ENCODE measurements at regions of chr9 and their contacts with region 1.

Region 1: DNA sequence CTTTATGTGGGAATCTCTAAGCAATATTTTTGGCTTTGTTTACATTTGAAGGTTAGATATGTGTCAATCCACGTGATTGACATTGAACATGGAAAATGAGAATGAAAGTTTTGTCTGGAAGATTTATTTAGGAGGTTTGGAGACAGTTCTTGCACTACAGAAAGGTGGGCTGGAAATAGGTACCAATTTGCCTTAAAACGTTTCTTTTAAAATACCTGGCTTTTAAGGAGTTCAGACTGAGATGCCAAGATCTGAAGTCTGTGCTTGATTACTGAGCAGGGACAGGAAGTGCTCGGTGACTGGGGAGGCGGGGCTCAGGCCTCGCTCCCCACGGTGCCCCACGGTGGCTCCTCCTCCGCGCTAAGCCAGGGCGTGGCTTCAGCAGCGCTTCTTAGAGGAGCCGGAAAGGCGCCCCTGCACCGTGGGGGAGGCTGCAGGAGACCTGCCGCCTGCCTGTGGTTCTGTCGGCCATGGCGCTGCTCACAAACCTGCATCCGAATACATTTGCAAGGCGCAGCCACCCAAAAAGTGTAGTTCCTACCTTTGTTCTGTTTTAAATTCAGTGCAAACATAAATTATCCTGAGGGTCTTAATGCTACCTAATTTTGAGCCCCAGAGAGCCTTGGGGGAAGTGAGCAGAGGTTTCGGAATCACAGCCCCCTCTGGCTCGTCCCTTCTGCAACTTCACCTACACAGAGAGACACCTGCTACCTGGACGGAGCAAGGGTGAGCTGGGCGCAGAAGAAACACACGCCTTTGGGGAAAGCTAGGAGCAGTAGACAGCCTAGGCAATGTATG is 49.2 kb downstream of the USP20 start:
- DNase-seq: peak; percentile 86 to 97 (median 96)
- ATAC-seq: peak; percentile 69
- H3K4me3 ChIP-seq: peak overlapping the region; percentile 58
- H3K4me3 Mint-ChIP-seq: peak overlapping the region; percentile 85 to 98 (median 94)
- H3K27ac ChIP-seq: peak overlapping the region; percentile 99
- H3K27ac Mint-ChIP-seq: peak overlapping the region; percentile 97 to 100 (median 100)
- H3K4me1 ChIP-seq: peaks cover 20 to 37% of the 10 kb centered on the region in 2 donors
- H3K4me1 Mint-ChIP-seq: peaks cover 37 to 57% (median 48%) of the 10 kb centered on the region in 7 donors
- H3K27me3 ChIP-seq: no peaks in the 10 kb centered on the region
- H3K27me3 Mint-ChIP-seq: peaks cover 0 to 4% (median 0%) of the 10 kb centered on the region in 5 donors

Region 2: GRCh38 chr9:129737479-129738274 is 146.7 kb before region 1 on chr9:
- CTCF ChIA-PET with region 1: interaction called, 3 read pairs
- POLR2A ChIA-PET with region 1: no interaction called
- intact Hi-C with region 1: loop called in 1 of 2 experiments (anchors 2 kb)
- DNase-seq: peak; percentile 73 to 95 (median 87)
- ATAC-seq: peak; percentile 96
- H3K4me3 ChIP-seq: peak overlapping the region; percentile 91
- H3K4me3 Mint-ChIP-seq: peak overlapping the region; percentile 66 to 84 (median 78)
- H3K27ac ChIP-seq: peak overlapping the region; percentile 76
- H3K27ac Mint-ChIP-seq: peak overlapping the region; percentile 50 to 94 (median 71)
- H3K4me1 ChIP-seq: peaks cover 6% of the 10 kb centered on the region in 2 donors
- H3K4me1 Mint-ChIP-seq: peaks cover 0 to 12% (median 8%) of the 10 kb centered on the region in 7 donors
- H3K27me3 ChIP-seq: no peaks in the 10 kb centered on the region
- H3K27me3 Mint-ChIP-seq: peaks cover 0 to 2% (median 0%) of the 10 kb centered on the region in 5 donors

Region 3: DNA sequence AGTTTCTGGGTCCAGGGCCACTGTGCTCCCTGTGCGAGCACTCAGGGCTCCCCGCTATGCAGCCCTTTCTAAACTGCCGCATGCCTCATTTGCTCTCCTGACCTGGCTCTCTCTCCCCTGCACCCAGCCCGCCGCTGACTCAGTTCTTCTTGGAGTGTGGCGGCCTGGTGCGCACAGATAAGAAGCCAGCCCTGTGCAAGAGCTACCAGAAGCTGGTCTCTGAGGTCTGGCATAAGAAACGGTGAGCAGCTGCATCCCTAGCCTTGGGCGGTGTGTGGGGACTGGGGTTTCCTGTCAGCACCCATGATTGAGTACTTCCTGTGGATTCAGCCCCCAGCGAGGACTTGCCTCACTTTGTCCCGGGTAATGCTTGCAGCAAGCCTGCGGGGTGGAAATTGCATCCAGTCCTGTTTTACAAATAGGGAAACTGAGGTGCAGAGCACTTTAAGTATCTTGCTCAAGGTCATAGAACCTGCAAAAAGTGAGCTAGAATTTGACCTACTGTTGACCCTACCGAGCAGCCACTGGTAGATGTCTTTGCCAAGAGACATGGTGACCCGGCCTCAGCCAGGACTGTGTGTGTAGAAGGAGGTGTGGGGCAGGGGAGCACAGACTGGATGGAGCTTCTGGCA is 21.2 kb before region 1 on chr9:
- CTCF ChIA-PET with region 1: interaction called, 9 read pairs
- POLR2A ChIA-PET with region 1: interaction called, 202 read pairs
- intact Hi-C with region 1: loop called in 1 of 2 experiments (anchors 1 kb)
- DNase-seq: peak in 8 of 9 donors; percentile 45 to 72 (median 53)
- ATAC-seq: peak; percentile 64
- H3K4me3 ChIP-seq: peak overlapping the region; percentile 30
- H3K4me3 Mint-ChIP-seq: peak overlapping the region; percentile 22 to 79 (median 71)
- H3K27ac ChIP-seq: peak overlapping the region; percentile 60
- H3K27ac Mint-ChIP-seq: peak overlapping the region; percentile 84 to 97 (median 93)
- H3K4me1 ChIP-seq: peaks cover 56 to 78% of the 10 kb centered on the region in 2 donors
- H3K4me1 Mint-ChIP-seq: peaks cover 40 to 72% (median 63%) of the 10 kb centered on the region in 7 donors
- H3K27me3 ChIP-seq: no peaks in the 10 kb centered on the region
- H3K27me3 Mint-ChIP-seq: no peaks in the 10 kb centered on the region

Region 4: GRCh38 chr9:129932303-129933151 is 48.1 kb after region 1 on chr9:
- CTCF ChIA-PET with region 1: no interaction called
- POLR2A ChIA-PET with region 1: interaction called, 4 read pairs
- intact Hi-C with region 1: loop called in 1 of 2 experiments (anchors 1 kb)
- DNase-seq: no peak
- ATAC-seq: peak; percentile 54
- H3K4me3 ChIP-seq: peak overlapping the region; percentile 24
- H3K4me3 Mint-ChIP-seq: peak overlapping the region; percentile 36 to 79 (median 68)
- H3K27ac ChIP-seq: peak overlapping the region; percentile 31
- H3K27ac Mint-ChIP-seq: peak overlapping the region; percentile 60 to 95 (median 85)
- H3K4me1 ChIP-seq: peaks cover 20 to 35% of the 10 kb centered on the region in 2 donors
- H3K4me1 Mint-ChIP-seq: peaks cover 31 to 61% (median 56%) of the 10 kb centered on the region in 7 donors
- H3K27me3 ChIP-seq: no peaks in the 10 kb centered on the region
- H3K27me3 Mint-ChIP-seq: no peaks in the 10 kb centered on the region

Region 5: GRCh38 chr9:130042833-130043653 is 158.6 kb after region 1 on chr9 and contains the start of gene FNBP1:
- CTCF ChIA-PET with region 1: interaction called, 5 read pairs
- POLR2A ChIA-PET with region 1: interaction called, 75 read pairs
- intact Hi-C with region 1: loop called (anchors 1 kb)
- DNase-seq: peak; percentile 75 to 89 (median 84)
- ATAC-seq: peak; percentile 87
- H3K4me3 ChIP-seq: peak within 1 kb of the TSS; percentile 89
- H3K4me3 Mint-ChIP-seq: peak within 1 kb of the TSS; percentile 94 to 100 (median 99)
- H3K27ac ChIP-seq: peak within 1 kb of the TSS; percentile 96
- H3K27ac Mint-ChIP-seq: peak within 1 kb of the TSS; percentile 96 to 99 (median 98)
- H3K4me1 ChIP-seq: peaks cover 31 to 36% of the 10 kb centered on the region in 2 donors
- H3K4me1 Mint-ChIP-seq: peaks cover 32 to 68% (median 53%) of the 10 kb centered on the region in 7 donors
- H3K27me3 ChIP-seq: no peaks in the 10 kb centered on the region
- H3K27me3 Mint-ChIP-seq: peaks cover 0 to 5% (median 0%) of the 10 kb centered on the region in 5 donors
- total RNA-seq, gene FNBP1: 160 to 207 (median 174) TPM

Region 6: GRCh38 chr9:130243015-130243734 is 358.8 kb after region 1 on chr9:
- CTCF ChIA-PET with region 1: no interaction called
- POLR2A ChIA-PET with region 1: no interaction called
- intact Hi-C with region 1: loop called (anchors 2 to 5 kb)
- DNase-seq: peak; percentile 42 to 81 (median 68)
- ATAC-seq: peak; percentile 91
- H3K4me3 ChIP-seq: peak overlapping the region; percentile 44
- H3K4me3 Mint-ChIP-seq: peak overlapping the region; percentile 11 to 83 (median 58)
- H3K27ac ChIP-seq: no peak overlapping the region
- H3K27ac Mint-ChIP-seq: peak overlapping the region in 1 of 9 donors; percentile 26
- H3K4me1 ChIP-seq: peaks cover 7 to 16% of the 10 kb centered on the region in 2 donors
- H3K4me1 Mint-ChIP-seq: peaks cover 8 to 32% (median 21%) of the 10 kb centered on the region in 7 donors
- H3K27me3 ChIP-seq: no peaks in the 10 kb centered on the region
- H3K27me3 Mint-ChIP-seq: no peaks in the 10 kb centered on the region

Region 7: GRCh38 chr9:130451509-130452388 is 567.3 kb after region 1 on chr9:
- CTCF ChIA-PET with region 1: no interaction called
- POLR2A ChIA-PET with region 1: no interaction called
- intact Hi-C with region 1: no loop called
- DNase-seq: peak in 1 of 9 donors; percentile 9
- ATAC-seq: no peak
- H3K4me3 ChIP-seq: no peak overlapping the region
- H3K4me3 Mint-ChIP-seq: no peak overlapping the region
- H3K27ac ChIP-seq: no peak overlapping the region
- H3K27ac Mint-ChIP-seq: no peak overlapping the region
- H3K4me1 ChIP-seq: no peaks in the 10 kb centered on the region
- H3K4me1 Mint-ChIP-seq: peaks cover 0 to 17% (median 0%) of the 10 kb centered on the region in 7 donors
- H3K27me3 ChIP-seq: no peaks in the 10 kb centered on the region
- H3K27me3 Mint-ChIP-seq: peaks cover 0 to 33% (median 7%) of the 10 kb centered on the region in 5 donors